ENCODE measurements at regions of chr9 and their contacts with region 1.

Region 1: DNA sequence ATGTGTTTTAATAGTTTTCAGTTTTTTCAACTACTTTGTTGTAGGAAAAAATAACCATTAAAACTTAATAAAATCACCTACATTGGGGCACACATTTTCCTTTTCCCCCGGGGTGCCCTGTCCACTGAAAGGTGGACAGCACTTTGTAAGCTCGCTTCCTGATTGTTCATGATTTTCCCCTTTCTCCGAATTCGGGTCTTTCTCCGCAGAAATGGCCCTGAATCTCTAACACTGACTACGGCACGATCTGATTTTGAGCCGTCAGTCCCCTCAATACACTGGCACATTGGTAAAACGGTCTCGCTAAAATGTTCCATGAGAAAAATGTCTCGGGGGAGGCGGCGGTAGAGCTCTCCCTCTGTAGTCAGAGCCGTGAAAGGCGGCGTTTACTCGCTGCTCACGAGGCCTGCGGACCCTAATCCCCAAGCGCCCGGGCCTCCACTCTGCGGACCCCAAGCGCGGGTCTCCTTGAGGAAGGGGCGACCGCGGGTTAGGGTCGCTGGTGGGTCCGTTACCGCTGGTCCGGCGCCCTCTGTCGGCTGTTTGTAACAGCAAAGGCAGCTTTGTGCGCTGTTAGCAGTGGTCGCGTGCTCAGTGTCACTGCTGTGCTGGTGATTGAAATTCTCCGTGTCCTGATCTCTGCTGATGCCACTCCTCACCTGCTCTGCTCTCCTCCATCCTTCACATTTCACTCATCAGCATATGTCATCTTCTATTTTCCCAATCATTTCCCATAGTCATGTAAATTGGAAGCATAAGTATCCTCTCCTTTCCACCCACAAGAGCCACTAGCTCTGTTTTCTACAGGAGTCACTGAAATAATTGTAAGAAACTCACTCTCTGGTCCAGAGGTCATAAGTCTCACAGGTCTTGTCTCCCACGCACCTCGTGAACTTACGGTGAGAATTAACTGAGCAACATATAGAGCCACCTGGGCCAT is 10.8 kb upstream of the IFNA2 start:
- DNase-seq: peak; percentile 65
- H3K4me3 ChIP-seq: peak overlapping the region; percentile 49 to 73
- H3K27ac ChIP-seq: no peak overlapping the region
- H3K4me1 ChIP-seq: peaks cover 0 to 4% of the 10 kb centered on the region in 2 experiments; a peak in 2 of 4 replicates
- H3K27me3 ChIP-seq: peaks cover 49% of the 10 kb centered on the region; the same call in 1 of the 2 replicates
- CTCF ChIP-seq: peak; percentile 95
- EP300 ChIP-seq: no peak
- RAD21 ChIP-seq: peak; percentile 64

Region 2: DNA sequence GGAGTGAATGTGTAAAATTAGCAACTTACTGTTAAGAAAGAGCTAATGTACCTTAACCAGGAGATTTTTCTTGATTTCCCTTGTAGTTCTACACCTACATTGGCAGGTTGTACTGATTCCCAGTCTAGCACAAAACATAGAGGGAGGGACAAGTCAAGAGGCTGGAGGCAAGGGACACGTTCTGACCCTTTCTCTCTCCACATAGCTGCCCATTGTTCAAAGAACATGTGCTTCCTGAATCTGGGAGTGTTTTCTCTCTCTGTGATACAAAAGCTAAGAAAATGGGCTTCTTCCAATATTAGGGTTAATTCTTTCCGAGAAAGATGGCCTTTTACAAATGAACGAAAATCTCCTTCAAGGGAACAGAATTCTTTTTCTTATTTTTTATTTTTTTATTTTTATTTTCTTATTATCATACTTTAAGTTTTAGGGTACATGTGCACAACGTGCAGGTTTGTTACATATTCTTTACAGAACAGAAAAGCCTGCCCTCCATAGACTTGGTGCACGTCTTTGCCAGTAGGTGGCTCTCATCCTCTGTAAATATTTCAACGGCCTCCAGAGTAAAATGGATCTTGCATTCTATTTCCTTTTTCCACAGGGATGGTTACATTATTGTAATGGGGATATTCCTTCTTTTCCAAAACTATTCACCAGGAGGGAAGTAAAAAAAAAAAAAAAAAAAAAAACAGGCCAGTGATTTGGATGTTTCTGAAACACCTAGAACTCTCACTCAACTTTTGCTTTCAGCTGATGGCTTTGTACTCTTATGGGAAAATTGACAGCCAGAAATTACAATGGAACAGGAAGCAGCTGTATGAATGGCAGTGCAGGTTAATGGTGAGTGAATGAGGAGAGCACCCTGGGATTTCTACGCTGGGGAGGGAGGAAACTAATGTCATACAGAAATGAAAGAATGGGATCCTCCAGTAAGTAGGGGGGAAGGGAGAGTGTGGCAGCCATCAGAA is 77.8 kb before region 1 on chr9:
- CTCF ChIA-PET with region 1: interaction called, 239 read pairs
- POLR2A ChIA-PET with region 1: no interaction called
- DNase-seq: peak; percentile 30
- H3K4me3 ChIP-seq: no peak overlapping the region
- H3K27ac ChIP-seq: no peak overlapping the region
- H3K4me1 ChIP-seq: no peaks in the 10 kb centered on the region
- H3K27me3 ChIP-seq: no peaks in the 10 kb centered on the region
- CTCF ChIP-seq: peak; percentile 77
- EP300 ChIP-seq: no peak
- RAD21 ChIP-seq: peak; percentile 75

Region 3: GRCh38 chr9:21334701-21335632 is 61.1 kb before region 1 on chr9 and contains the start of gene KLHL9:
- CTCF ChIA-PET with region 1: interaction called, 143 read pairs
- POLR2A ChIA-PET with region 1: no interaction called
- DNase-seq: peak; percentile 97
- H3K4me3 ChIP-seq: peak within 1 kb of the TSS; percentile 89 to 96
- H3K27ac ChIP-seq: peak within 1 kb of the TSS; percentile 83 to 90
- H3K4me1 ChIP-seq: peaks cover 7 to 28% of the 10 kb centered on the region in 2 experiments; a peak in 3 of 4 replicates
- H3K27me3 ChIP-seq: peaks cover 7% of the 10 kb centered on the region; the same call in 1 of the 2 replicates
- CTCF ChIP-seq: no peak
- EP300 ChIP-seq: peak in 1 of 2 experiments; percentile 24; a peak in 1 of 4 replicates
- RAD21 ChIP-seq: no peak
- polyA plus RNA-seq, gene KLHL9: 6.8 and 8.8 TPM in 2 replicates

Region 4: GRCh38 chr9:21381448-21382339 is 14.4 kb before region 1 on chr9:
- CTCF ChIA-PET with region 1: interaction called, 26 read pairs
- POLR2A ChIA-PET with region 1: no interaction called
- DNase-seq: no peak
- H3K4me3 ChIP-seq: no peak overlapping the region
- H3K27ac ChIP-seq: no peak overlapping the region
- H3K4me1 ChIP-seq: no peaks in the 10 kb centered on the region
- H3K27me3 ChIP-seq: peaks cover 23% of the 10 kb centered on the region; the same call in 1 of the 2 replicates
- CTCF ChIP-seq: no peak
- EP300 ChIP-seq: no peak
- RAD21 ChIP-seq: no peak

Region 5: DNA sequence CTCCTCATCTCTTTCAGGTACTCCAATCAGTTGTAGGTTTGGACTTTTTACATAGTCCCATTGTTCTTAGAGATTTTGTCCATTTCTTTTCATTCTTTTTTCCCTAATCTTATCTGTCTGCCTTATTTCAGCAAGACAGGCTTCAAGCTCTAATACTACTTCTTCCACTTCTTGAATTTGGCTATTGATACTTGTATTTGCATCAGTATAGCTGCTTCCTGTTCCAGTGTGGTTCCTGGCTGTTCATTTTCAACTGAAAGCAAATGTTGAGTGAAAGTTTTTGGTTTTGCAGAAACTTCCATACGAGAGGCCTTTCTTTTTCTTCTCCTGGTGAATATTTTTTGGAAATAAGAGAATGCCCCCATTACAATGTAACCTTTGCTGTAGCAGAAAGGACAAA is 32.2 kb after region 1 on chr9:
- CTCF ChIA-PET with region 1: interaction called, 11 read pairs
- POLR2A ChIA-PET with region 1: no interaction called
- DNase-seq: no peak
- H3K4me3 ChIP-seq: no peak overlapping the region
- H3K27ac ChIP-seq: no peak overlapping the region
- H3K4me1 ChIP-seq: no peaks in the 10 kb centered on the region
- H3K27me3 ChIP-seq: no peaks in the 10 kb centered on the region
- CTCF ChIP-seq: no peak
- EP300 ChIP-seq: no peak
- RAD21 ChIP-seq: no peak

Region 6: GRCh38 chr9:21616082-21616778 is 220.2 kb after region 1 on chr9:
- CTCF ChIA-PET with region 1: no interaction called
- POLR2A ChIA-PET with region 1: no interaction called
- DNase-seq: no peak
- H3K4me3 ChIP-seq: no peak overlapping the region
- H3K27ac ChIP-seq: no peak overlapping the region
- H3K4me1 ChIP-seq: no peaks in the 10 kb centered on the region
- H3K27me3 ChIP-seq: peaks cover 25% of the 10 kb centered on the region
- CTCF ChIP-seq: no peak
- EP300 ChIP-seq: no peak
- RAD21 ChIP-seq: no peak